Activated CD4-positive, alpha-beta T cell treated with anti-CD3 and anti-CD28 coated beads for 36 hours (primary cell): ENCODE measurements at regions of chr12 and their contacts with region 1.

Region 1: DNA sequence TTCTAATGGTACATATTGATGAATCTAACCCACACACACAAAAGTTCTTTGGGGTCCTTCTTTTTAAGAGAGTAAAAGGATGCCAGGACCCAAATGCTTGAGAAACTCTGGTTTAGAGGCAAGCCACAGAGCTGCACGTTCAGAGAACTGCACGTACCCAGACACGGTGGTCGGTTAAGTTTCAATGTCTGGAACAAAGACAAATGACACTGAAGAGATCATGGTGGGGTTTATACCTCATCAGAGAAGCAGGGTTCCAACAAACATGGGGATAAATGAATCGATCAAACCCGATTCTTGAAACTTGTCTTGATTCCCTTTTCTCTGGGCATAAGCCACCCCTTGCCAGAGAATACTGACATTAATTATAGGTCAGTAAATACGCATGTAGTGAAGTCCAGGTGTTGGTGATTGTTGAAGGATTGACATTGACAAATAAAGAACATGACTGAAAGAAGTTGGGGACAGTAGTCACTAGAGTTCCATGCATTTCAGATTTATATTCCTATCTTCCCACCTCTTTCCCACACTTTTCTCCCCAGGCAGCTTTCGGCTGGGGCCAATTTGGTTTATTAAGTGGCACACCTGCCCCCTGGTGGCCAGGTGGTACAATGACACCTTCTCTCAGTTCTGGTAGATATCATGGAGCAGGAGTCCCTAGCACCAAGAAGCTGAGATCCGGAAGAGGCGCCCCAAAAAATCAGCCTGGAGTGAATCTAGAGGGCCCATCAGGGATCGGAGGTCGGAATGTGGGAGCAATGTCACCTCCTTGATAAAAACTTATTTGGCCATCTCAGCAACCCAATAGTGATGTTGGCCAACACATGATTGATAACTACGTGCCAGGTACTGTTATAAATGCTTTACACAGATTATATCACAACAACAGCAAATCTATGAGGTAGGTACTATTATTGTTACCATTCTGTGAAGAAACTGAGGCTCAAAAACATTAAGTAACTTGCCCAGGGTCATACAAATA is 17.8 kb upstream of the HDAC7 start:
- DNase-seq: peak; percentile 80
- ATAC-seq: no peak
- H3K4me3 Mint-ChIP-seq: peak overlapping the region; percentile 3
- H3K27ac Mint-ChIP-seq: peak overlapping the region; percentile 49
- H3K4me1 Mint-ChIP-seq: peaks cover 65% of the 10 kb centered on the region
- H3K27me3 Mint-ChIP-seq: no peaks in the 10 kb centered on the region

Region 2: GRCh38 chr12:47715393-47715876 is 122.0 kb before region 1 on chr12:
- CTCF ChIA-PET with region 1: interaction called, 52 read pairs
- POLR2A ChIA-PET with region 1: no interaction called
- intact Hi-C with region 1: loop called (anchors 1 kb)
- DNase-seq: peak; percentile 91
- ATAC-seq: peak; percentile 86
- H3K4me3 Mint-ChIP-seq: no peak overlapping the region
- H3K27ac Mint-ChIP-seq: no peak overlapping the region
- H3K4me1 Mint-ChIP-seq: peaks cover 18% of the 10 kb centered on the region
- H3K27me3 Mint-ChIP-seq: no peaks in the 10 kb centered on the region

Region 3: DNA sequence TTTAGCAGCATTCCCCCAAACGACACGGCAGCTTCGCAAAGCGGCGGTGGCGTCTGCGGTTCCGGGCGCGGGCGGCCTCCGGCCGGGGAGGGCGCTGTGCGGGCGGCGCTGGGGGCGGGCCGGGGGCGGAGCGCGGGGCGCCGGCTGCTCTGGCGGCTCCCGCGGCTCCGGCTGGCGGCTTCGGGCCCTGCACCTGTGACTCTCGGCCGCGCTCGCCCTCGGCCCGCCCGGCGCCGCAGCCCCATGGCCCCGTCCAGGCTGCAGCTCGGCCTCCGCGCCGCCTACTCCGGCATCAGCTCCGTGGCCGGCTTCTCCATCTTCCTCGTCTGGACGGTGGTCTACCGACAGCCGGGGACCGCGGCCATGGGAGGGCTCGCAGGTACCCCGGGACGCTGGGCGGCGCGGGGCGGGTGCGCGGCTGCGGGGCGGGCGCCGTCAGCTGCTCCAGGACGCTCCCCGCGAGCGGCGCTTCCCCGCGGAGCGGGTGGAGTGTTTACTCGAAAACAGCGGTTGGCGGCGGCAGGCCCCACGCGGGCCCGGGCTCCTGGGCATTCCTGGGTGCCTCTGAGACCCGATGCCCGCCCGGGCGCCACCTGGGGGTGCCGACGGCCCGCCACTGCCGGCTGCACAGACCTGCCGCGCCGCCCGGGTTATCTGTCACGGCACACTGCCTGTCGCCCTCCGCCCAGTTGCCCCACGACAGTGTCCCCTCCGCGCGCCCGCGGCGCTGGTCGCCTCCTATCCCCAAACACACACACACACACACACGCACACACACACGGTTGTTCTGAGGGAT is 64.2 kb before region 1 on chr12 and contains the start of gene SLC48A1:
- CTCF ChIA-PET with region 1: interaction called, 90 read pairs
- POLR2A ChIA-PET with region 1: interaction called, 3 read pairs
- intact Hi-C with region 1: no loop called
- DNase-seq: peak; percentile 82
- ATAC-seq: peak; percentile 79
- H3K4me3 Mint-ChIP-seq: peak within 1 kb of the TSS; percentile 82
- H3K27ac Mint-ChIP-seq: peak within 1 kb of the TSS; percentile 71
- H3K4me1 Mint-ChIP-seq: peaks cover 31% of the 10 kb centered on the region
- H3K27me3 Mint-ChIP-seq: no peaks in the 10 kb centered on the region
- total RNA-seq, gene SLC48A1: 5.9 to 8.5 TPM

Region 4: DNA sequence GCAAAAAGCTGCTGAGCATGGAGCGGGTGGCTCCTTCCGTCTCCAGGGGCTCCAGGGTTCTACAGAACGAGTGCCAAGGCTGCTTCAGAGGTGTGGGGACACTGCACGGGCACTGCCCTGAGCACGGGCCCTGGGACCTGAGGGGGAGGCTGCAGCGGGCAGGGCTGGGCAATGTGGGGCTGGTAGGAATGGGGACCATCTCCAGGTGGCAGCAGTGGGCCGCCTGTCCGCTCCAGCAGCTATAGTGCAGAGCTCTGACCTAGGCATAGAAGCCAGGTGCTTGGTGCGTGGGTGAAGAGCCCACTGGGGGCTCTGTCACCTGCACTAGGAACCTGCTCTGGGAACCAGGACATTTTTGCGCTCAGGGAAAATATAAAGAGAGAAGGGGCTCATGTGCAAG is 40.0 kb before region 1 on chr12:
- CTCF ChIA-PET with region 1: interaction called, 71 read pairs
- POLR2A ChIA-PET with region 1: interaction called, 16 read pairs
- intact Hi-C with region 1: loop called (anchors 1 kb)
- DNase-seq: peak; percentile 57
- ATAC-seq: peak; percentile 44
- H3K4me3 Mint-ChIP-seq: no peak overlapping the region
- H3K27ac Mint-ChIP-seq: peak overlapping the region; percentile 42
- H3K4me1 Mint-ChIP-seq: peaks cover 35% of the 10 kb centered on the region
- H3K27me3 Mint-ChIP-seq: no peaks in the 10 kb centered on the region

Region 5: DNA sequence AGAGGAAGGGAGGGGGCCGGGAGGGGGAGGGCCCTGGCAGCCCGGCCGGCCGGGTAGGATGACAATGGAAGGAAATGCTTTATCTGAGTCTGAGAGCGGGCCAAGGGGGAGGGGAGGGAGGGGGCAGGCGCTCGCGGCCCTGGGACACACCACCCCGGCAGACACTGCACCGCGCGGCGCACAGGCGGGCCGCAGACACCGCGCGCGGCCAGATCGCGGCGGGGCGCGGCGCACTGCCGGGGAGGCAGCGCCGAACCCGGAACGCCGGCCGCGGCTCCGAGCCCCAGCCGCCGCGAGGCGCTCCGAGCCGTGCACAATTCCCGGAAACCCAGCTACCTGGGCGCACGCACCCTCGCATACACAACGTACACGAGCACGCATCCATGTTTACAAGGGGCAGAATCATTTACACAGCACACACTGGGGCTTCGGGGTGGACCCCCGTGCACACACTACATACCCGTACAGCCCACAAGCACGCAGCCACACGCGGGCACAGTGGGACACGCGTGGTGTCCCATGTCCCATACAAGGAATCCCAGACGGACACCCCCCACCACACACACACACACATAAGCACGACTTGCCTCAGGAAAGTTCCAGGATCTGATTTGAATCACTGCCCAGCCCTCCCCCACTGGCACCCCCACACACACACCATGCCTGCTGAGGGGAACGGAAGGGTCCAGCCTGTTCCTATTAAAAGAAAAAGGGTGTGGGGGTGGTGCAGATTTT is 17.4 kb before region 1 on chr12 and contains the start of gene HDAC7:
- CTCF ChIA-PET with region 1: interaction called, 303 read pairs
- POLR2A ChIA-PET with region 1: interaction called, 215 read pairs
- intact Hi-C with region 1: loop called (anchors 1 kb)
- DNase-seq: peak; percentile 90
- ATAC-seq: peak; percentile 48
- H3K4me3 Mint-ChIP-seq: peak within 1 kb of the TSS; percentile 94
- H3K27ac Mint-ChIP-seq: peak within 1 kb of the TSS; percentile 99
- H3K4me1 Mint-ChIP-seq: peaks cover 68% of the 10 kb centered on the region
- H3K27me3 Mint-ChIP-seq: no peaks in the 10 kb centered on the region
- total RNA-seq, gene HDAC7: 331 to 385 TPM

Region 6: DNA sequence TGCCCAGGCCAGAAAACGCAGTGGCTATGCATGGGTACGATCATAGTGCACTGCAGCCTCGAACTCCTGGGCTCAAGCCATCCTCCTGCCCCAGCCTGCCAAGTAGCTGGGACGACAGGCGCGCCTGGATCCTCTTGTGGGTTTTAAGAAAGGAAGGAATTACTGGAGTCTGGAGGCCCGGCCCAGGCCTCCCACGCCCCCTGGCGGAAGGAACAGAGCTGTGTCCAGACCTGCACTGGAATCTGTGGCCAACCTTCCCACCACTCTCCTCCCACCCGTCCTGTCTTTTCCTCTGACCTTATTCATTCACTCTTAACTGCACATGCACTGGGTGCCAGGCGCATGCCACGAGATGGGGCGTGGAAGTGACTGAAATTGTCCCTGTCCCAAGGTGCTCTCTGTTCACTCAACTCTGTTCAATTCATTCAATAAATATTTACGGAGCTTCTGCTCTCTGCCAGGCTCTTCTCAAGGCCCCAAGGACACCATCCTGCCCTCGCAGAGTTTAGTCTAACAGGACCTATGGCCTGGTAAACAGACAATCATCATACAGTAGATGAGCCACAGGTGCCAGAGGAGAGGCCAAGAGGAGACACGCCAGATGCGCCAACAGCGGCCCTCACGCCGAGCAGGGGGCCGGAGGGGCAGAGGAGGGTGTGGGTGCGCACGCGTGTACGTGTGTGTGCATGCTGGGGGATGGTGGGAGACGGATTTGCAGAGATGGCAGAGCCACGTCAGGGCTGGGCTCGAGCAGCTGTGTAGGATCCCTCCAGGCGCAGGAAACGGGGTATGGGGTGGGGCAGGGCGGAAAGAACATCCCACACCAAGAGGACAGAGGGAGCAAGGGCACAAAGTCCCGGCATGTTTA is 112.2 kb after region 1 on chr12:
- CTCF ChIA-PET with region 1: interaction called, 5 read pairs
- POLR2A ChIA-PET with region 1: no interaction called
- intact Hi-C with region 1: loop called in 1 of 2 experiments (anchors 2 kb)
- DNase-seq: peak; percentile 78
- ATAC-seq: peak; percentile 83
- H3K4me3 Mint-ChIP-seq: no peak overlapping the region
- H3K27ac Mint-ChIP-seq: peak overlapping the region; percentile 10
- H3K4me1 Mint-ChIP-seq: peaks cover 10% of the 10 kb centered on the region
- H3K27me3 Mint-ChIP-seq: peaks cover 3% of the 10 kb centered on the region